ENCODE measurements at regions of chr16 and their contacts with region 1.

Region 1: GRCh38 chr16:74296432-74297144 is at the start of gene PSMD7:
- DNase-seq: peak; percentile 82 to 93 (median 90)
- ATAC-seq: peak; percentile 96
- H3K4me3 ChIP-seq: peak within 1 kb of the TSS; percentile 86
- H3K4me3 Mint-ChIP-seq: peak within 1 kb of the TSS; percentile 89 to 99 (median 96)
- H3K27ac ChIP-seq: peak within 1 kb of the TSS; percentile 96
- H3K27ac Mint-ChIP-seq: peak within 1 kb of the TSS; percentile 93 to 100 (median 98)
- H3K4me1 ChIP-seq: peaks cover 22 to 25% of the 10 kb centered on the region in 2 donors
- H3K4me1 Mint-ChIP-seq: peaks cover 21 to 52% (median 38%) of the 10 kb centered on the region in 7 donors
- H3K27me3 ChIP-seq: no peaks in the 10 kb centered on the region
- H3K27me3 Mint-ChIP-seq: no peaks in the 10 kb centered on the region
- total RNA-seq, gene PSMD7: 61.1 to 107 (median 71.3) TPM

Region 2: DNA sequence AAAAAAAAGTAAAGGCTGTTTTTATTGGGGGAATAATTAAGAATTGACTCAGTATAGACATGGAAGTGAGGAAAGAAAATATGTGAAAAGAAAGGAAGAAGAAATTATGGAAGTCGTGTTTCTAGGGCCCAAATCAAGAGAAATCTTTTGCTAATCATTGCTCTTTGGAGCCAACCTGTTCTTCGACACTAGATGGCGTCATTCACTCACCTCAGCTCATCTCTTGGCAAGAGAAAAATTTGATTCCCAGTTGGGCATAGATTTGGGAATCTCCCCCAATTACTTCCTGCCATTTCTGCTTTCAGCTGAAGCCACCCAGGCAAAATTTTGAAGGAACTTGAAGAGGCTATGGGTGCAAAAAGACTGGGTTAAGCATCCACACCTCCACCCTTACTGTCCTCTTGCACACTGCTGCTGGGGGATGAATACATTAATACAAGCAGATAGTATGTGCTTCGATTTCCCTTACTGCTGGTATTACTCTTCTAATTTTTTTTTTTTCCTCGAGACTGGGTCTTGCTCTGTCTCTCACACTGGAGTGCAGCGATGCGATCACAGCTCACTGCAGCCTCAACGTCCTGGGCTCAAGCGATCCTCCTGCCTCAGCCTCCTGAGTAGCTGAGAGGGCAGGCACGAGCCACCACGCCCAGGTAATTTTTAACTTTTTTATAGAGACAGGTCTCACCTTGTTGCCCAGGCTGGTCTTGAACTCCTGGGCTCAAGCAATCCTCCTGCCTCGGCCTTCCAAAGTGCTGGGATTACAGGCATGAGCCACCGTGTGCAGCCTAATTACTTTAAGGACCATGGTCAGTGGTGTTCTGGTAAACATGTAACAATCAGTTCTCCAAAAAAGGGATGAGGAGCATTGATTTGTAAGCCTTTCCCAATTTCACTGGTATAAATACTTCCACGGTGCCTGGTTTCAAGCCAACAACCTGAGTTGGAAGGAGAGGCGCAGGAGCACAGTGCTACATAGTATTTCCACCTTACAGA is 13.5 kb after region 1 on chr16:
- CTCF ChIA-PET with region 1: interaction called, 5 read pairs
- POLR2A ChIA-PET with region 1: interaction called, 19 read pairs
- intact Hi-C with region 1: no loop called
- DNase-seq: peak in 4 of 9 donors; percentile 17 to 44 (median 26)
- ATAC-seq: peak; percentile 64
- H3K4me3 ChIP-seq: no peak overlapping the region
- H3K4me3 Mint-ChIP-seq: no peak overlapping the region
- H3K27ac ChIP-seq: no peak overlapping the region
- H3K27ac Mint-ChIP-seq: no peak overlapping the region
- H3K4me1 ChIP-seq: no peaks in the 10 kb centered on the region
- H3K4me1 Mint-ChIP-seq: peaks cover 0 to 4% (median 2%) of the 10 kb centered on the region in 7 donors
- H3K27me3 ChIP-seq: no peaks in the 10 kb centered on the region
- H3K27me3 Mint-ChIP-seq: no peaks in the 10 kb centered on the region

Region 3: GRCh38 chr16:74666425-74667254 is 370.1 kb after region 1 on chr16 and contains the start of gene RFWD3:
- CTCF ChIA-PET with region 1: no interaction called
- POLR2A ChIA-PET with region 1: no interaction called
- intact Hi-C with region 1: loop called (anchors 1 kb)
- DNase-seq: peak; percentile 80 to 99 (median 97)
- ATAC-seq: peak; percentile 100
- H3K4me3 ChIP-seq: peak within 1 kb of the TSS; percentile 89
- H3K4me3 Mint-ChIP-seq: peak within 1 kb of the TSS; percentile 87 to 98 (median 95)
- H3K27ac ChIP-seq: peak within 1 kb of the TSS; percentile 86
- H3K27ac Mint-ChIP-seq: peak within 1 kb of the TSS; percentile 92 to 97 (median 95)
- H3K4me1 ChIP-seq: peaks cover 0 to 10% of the 10 kb centered on the region in 2 donors
- H3K4me1 Mint-ChIP-seq: peaks cover 26 to 48% (median 44%) of the 10 kb centered on the region in 7 donors
- H3K27me3 ChIP-seq: no peaks in the 10 kb centered on the region
- H3K27me3 Mint-ChIP-seq: peaks cover 0 to 2% (median 0%) of the 10 kb centered on the region in 5 donors
- total RNA-seq, gene RFWD3: 39.3 to 88.0 (median 56.9) TPM

Region 4: DNA sequence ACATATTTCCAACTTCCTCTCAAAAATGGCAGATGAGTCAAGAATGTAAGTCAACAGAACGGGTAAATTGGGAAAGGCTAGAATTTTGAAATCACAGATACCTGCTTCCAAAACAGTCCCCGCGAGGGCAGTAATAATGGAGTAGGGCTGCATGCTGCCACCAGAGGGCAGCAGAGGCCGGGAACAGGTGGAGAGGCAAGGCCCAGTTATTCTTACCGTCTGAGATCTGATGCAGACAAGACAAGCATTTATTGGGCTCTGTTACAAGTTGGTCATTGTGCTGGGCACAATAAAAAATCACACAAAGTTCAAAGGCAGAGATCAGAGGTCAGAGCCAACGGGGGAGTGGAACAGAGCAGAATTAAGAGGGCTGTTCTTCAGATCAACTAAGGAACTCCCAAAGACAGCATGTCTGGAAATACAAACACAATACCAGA is 412.9 kb after region 1 on chr16:
- CTCF ChIA-PET with region 1: no interaction called
- POLR2A ChIA-PET with region 1: no interaction called
- intact Hi-C with region 1: loop called in 1 of 2 experiments (anchors 10 kb)
- DNase-seq: peak; percentile 62 to 86 (median 78)
- ATAC-seq: peak; percentile 99
- H3K4me3 ChIP-seq: no peak overlapping the region
- H3K4me3 Mint-ChIP-seq: no peak overlapping the region
- H3K27ac ChIP-seq: no peak overlapping the region
- H3K27ac Mint-ChIP-seq: peak overlapping the region in 5 of 9 donors; percentile 3 to 85 (median 29)
- H3K4me1 ChIP-seq: no peaks in the 10 kb centered on the region
- H3K4me1 Mint-ChIP-seq: peaks cover 4 to 10% (median 6%) of the 10 kb centered on the region in 7 donors
- H3K27me3 ChIP-seq: no peaks in the 10 kb centered on the region
- H3K27me3 Mint-ChIP-seq: peaks cover 0 to 6% (median 0%) of the 10 kb centered on the region in 5 donors

Region 5: GRCh38 chr16:75555707-75556430 is 1259.3 kb after region 1 on chr16 and contains the start of gene TMEM231:
- CTCF ChIA-PET with region 1: no interaction called
- POLR2A ChIA-PET with region 1: no interaction called
- intact Hi-C with region 1: loop called in 1 of 2 experiments (anchors 5 kb)
- DNase-seq: peak; percentile 91 to 97 (median 93)
- ATAC-seq: peak; percentile 98
- H3K4me3 ChIP-seq: peak within 1 kb of the TSS; percentile 84
- H3K4me3 Mint-ChIP-seq: peak within 1 kb of the TSS; percentile 74 to 93 (median 88)
- H3K27ac ChIP-seq: peak within 1 kb of the TSS; percentile 66
- H3K27ac Mint-ChIP-seq: peak within 1 kb of the TSS; percentile 81 to 97 (median 89)
- H3K4me1 ChIP-seq: peaks cover 10% of the 10 kb centered on the region in 2 donors
- H3K4me1 Mint-ChIP-seq: peaks cover 5 to 14% (median 10%) of the 10 kb centered on the region in 7 donors
- H3K27me3 ChIP-seq: no peaks in the 10 kb centered on the region
- H3K27me3 Mint-ChIP-seq: peaks cover 0 to 33% (median 5%) of the 10 kb centered on the region in 5 donors
- total RNA-seq, gene TMEM231: 1.5 to 3.9 (median 3.4) TPM